ENCODE measurements at regions of chr10 and their contacts with region 1.

Region 1: DNA sequence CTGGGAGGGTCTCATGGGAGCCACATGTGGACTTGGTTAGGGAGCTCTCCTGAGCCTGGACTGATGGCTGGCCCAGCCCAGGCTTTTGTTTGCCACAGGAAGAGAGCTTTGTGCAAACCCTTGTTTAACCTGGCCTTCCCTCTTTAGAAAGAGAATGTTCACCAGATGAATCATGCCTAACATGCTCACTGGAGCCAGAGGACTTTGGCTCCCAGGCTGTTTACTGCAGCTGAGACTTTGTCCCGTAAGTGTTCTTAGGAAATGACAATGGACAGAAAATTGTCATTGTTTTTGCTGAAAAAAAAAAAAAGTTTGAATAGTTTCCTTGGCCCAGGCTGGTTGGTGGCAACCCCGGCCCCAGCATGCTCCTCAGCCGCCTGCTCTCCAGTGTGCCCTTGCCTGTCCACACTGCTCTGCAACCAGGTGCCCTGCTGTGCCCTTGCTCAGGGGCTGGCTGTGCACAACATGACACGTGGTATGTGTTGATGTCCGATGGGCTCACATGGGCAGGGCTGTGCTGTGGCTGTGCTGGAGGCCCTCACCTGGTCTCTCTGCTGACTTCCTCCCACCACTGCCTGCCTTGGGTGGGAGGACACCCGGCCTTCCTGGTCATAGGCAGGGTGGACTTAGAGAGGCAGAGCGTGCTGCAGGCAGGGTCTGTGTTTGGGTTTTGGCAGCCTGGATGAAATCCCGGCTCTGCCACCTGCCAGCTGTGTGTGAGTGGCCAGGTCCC is 215.3 kb upstream of the ZNF32 start:
- DNase-seq: no peak
- ATAC-seq: no peak
- H3K4me3 ChIP-seq: no peak overlapping the region
- H3K27ac ChIP-seq: no peak overlapping the region
- H3K4me1 ChIP-seq: no peaks in the 10 kb centered on the region
- H3K27me3 ChIP-seq: no peaks in the 10 kb centered on the region; a peak in 1 of 4 replicates
- CTCF ChIP-seq: no peak
- EP300 ChIP-seq: no peak
- POLR2A ChIP-seq: no peak
- RAD21 ChIP-seq: no peak

Region 2: GRCh38 chr10:43292755-43293676 is 571.0 kb before region 1 on chr10:
- CTCF ChIA-PET with region 1: no interaction called
- POLR2A ChIA-PET with region 1: no interaction called
- RAD21 ChIA-PET with region 1: no interaction called
- SMC1A ChIA-PET with region 1: no interaction called
- in situ Hi-C with region 1: no loop called
- intact Hi-C with region 1: no loop called
- DNase-seq: no peak
- ATAC-seq: peak; percentile 93
- H3K4me3 ChIP-seq: no peak overlapping the region
- H3K27ac ChIP-seq: no peak overlapping the region
- H3K4me1 ChIP-seq: no peaks in the 10 kb centered on the region; the same call in 1 of the 2 replicates
- H3K27me3 ChIP-seq: no peaks in the 10 kb centered on the region
- CTCF ChIP-seq: peak; percentile 67 to 76 (median 75)
- EP300 ChIP-seq: no peak
- POLR2A ChIP-seq: no peak
- RAD21 ChIP-seq: peak; percentile 66

Region 3: GRCh38 chr10:43479275-43479674 is 384.8 kb before region 1 on chr10:
- CTCF ChIA-PET with region 1: no interaction called
- POLR2A ChIA-PET with region 1: no interaction called
- RAD21 ChIA-PET with region 1: no interaction called
- SMC1A ChIA-PET with region 1: no interaction called
- in situ Hi-C with region 1: loop called (anchors 25 kb)
- intact Hi-C with region 1: no loop called
- DNase-seq: no peak
- ATAC-seq: no peak
- H3K4me3 ChIP-seq: no peak overlapping the region
- H3K27ac ChIP-seq: no peak overlapping the region
- H3K4me1 ChIP-seq: no peaks in the 10 kb centered on the region
- H3K27me3 ChIP-seq: no peaks in the 10 kb centered on the region
- CTCF ChIP-seq: no peak
- EP300 ChIP-seq: no peak
- POLR2A ChIP-seq: no peak
- RAD21 ChIP-seq: no peak

Region 4: GRCh38 chr10:43691485-43691884 is 172.5 kb before region 1 on chr10:
- CTCF ChIA-PET with region 1: no interaction called
- POLR2A ChIA-PET with region 1: no interaction called
- RAD21 ChIA-PET with region 1: no interaction called
- SMC1A ChIA-PET with region 1: no interaction called
- in situ Hi-C with region 1: no loop called
- intact Hi-C with region 1: no loop called
- DNase-seq: no peak
- ATAC-seq: no peak
- H3K4me3 ChIP-seq: no peak overlapping the region
- H3K27ac ChIP-seq: no peak overlapping the region
- H3K4me1 ChIP-seq: peaks cover 3% of the 10 kb centered on the region; the same call in 1 of the 2 replicates
- H3K27me3 ChIP-seq: no peaks in the 10 kb centered on the region; a peak in 1 of 4 replicates
- CTCF ChIP-seq: no peak
- EP300 ChIP-seq: no peak
- POLR2A ChIP-seq: no peak
- RAD21 ChIP-seq: no peak

Region 5: DNA sequence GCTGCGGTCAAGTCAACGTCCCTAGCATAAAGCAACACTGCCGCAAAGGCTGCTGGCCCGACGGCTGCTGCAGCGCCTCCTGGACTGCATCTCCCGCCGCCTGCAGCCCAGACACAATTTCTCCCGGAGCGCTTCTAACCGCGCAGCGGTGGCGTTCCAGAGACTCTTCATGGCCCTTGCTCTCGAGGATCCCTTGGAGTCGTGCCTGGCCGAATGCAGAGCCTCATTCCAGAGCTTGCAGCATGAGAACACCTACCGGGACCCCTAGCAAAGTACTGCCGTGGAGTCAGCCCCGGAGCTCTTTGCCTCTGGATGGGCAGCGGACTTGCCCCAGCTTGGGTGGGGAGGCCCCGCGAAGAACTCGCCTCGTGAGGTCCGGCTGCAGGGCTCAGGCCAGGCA is 135.6 kb before region 1 on chr10:
- CTCF ChIA-PET with region 1: no interaction called
- POLR2A ChIA-PET with region 1: no interaction called
- RAD21 ChIA-PET with region 1: no interaction called
- SMC1A ChIA-PET with region 1: no interaction called
- in situ Hi-C with region 1: no loop called
- intact Hi-C with region 1: no loop called
- DNase-seq: no peak
- ATAC-seq: no peak
- H3K4me3 ChIP-seq: no peak overlapping the region
- H3K27ac ChIP-seq: no peak overlapping the region
- H3K4me1 ChIP-seq: no peaks in the 10 kb centered on the region
- H3K27me3 ChIP-seq: no peaks in the 10 kb centered on the region
- CTCF ChIP-seq: no peak
- EP300 ChIP-seq: no peak
- POLR2A ChIP-seq: no peak
- RAD21 ChIP-seq: no peak

Region 6: GRCh38 chr10:43749940-43750552 is 114.0 kb before region 1 on chr10:
- CTCF ChIA-PET with region 1: no interaction called
- POLR2A ChIA-PET with region 1: no interaction called
- RAD21 ChIA-PET with region 1: no interaction called
- SMC1A ChIA-PET with region 1: no interaction called
- in situ Hi-C with region 1: loop called (anchors 25 kb)
- intact Hi-C with region 1: no loop called
- DNase-seq: no peak
- ATAC-seq: no peak
- H3K4me3 ChIP-seq: no peak overlapping the region
- H3K27ac ChIP-seq: no peak overlapping the region
- H3K4me1 ChIP-seq: no peaks in the 10 kb centered on the region
- H3K27me3 ChIP-seq: no peaks in the 10 kb centered on the region; a peak in 1 of 4 replicates
- CTCF ChIP-seq: no peak
- EP300 ChIP-seq: no peak
- POLR2A ChIP-seq: no peak
- RAD21 ChIP-seq: no peak